ENCODE measurements at regions of chr5 and their contacts with region 1.

Region 1: DNA sequence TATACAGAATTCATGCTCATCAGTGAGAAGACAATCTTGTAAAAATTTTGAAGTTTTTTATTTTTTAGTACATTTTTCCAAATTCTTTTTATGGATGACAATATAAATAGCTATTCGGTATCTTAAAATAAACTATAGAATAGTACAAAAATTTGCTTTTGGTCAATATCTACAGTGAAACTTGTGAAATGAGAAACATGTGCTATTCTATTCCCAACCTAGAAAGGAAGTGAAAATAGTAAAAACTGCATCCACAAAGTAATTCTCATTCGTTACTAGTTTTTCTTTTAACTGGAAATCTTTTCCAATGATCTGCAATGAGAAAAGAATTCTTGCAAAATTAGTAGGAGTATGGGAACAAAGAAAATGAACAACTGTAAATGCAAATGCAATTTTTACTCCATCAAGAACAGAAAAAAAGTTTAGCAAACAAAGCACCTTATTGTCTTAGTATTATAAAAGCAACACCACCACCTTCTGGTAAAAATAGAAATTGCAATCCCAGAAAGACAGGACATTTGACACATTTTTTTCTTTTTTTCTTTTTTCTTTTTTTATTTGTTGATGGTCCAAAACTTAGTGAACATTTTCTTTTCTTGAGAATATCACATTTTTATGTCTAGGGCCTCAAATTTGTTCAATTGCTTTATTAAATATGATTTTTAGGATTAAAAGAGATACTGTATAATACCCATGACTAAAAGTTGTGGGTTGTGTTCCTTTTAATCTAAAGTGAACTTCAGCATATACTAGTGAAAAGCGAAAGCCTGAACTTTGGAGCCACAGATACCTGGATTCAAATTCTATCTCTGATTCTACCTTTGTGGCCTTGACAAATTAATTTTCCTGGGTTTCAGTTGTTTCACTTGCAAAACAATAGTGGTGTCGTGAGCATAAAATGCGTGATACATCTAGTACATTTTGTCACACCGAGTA is 72.3 kb downstream of the SLCO4C1 start:
- DNase-seq: no peak
- H3K4me3 ChIP-seq: no peak overlapping the region
- H3K27ac ChIP-seq: no peak overlapping the region
- H3K4me1 ChIP-seq: no peaks in the 10 kb centered on the region
- H3K27me3 ChIP-seq: no peaks in the 10 kb centered on the region
- CTCF ChIP-seq: peak; percentile 84

Region 2: DNA sequence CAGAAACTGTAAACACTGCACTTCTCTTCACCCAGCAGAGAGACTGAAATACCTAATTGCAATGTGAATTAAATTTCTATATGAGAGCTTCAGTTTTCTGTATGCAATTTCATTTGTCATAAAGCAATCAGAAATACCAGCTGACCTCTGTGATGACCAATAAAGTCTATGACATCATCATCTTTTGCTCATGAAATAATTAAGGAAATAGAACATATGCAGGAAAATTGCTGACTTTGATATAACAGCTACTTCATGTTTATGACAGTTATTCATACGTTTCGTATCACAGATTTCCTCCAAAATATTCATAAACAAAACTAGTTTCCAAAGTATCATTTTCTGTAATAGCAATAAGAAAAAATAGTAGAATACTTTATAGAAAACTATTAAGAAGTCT is 580.0 kb before region 1 on chr5:
- CTCF ChIA-PET with region 1: interaction called, 14 read pairs
- POLR2A ChIA-PET with region 1: no interaction called
- intact Hi-C with region 1: no loop called
- DNase-seq: no peak
- H3K4me3 ChIP-seq: no peak overlapping the region
- H3K27ac ChIP-seq: no peak overlapping the region
- H3K4me1 ChIP-seq: no peaks in the 10 kb centered on the region
- H3K27me3 ChIP-seq: no peaks in the 10 kb centered on the region
- CTCF ChIP-seq: no peak

Region 3: DNA sequence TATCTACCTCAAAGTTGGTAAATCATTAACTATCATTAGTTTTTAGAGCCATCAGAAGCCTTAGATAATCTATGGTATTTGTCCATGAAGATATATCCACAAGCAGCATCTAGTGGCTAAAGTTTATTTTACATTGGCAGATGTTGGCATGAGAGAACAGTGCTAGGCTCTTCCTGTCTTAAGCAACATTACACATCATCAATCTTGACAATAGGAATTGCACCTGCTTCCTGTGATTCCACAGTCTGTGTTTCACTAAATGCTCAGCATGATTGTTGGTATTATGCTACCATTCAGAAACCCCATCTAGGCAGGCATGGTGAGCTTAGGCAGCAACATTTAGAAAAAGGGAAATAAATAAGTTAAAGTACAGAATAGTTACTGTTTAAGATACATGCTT is 174.3 kb before region 1 on chr5:
- CTCF ChIA-PET with region 1: no interaction called
- POLR2A ChIA-PET with region 1: no interaction called
- intact Hi-C with region 1: no loop called
- DNase-seq: no peak
- H3K4me3 ChIP-seq: no peak overlapping the region
- H3K27ac ChIP-seq: no peak overlapping the region
- H3K4me1 ChIP-seq: no peaks in the 10 kb centered on the region
- H3K27me3 ChIP-seq: no peaks in the 10 kb centered on the region
- CTCF ChIP-seq: no peak

Region 4: GRCh38 chr5:102341681-102342288 is 118.0 kb after region 1 on chr5:
- CTCF ChIA-PET with region 1: no interaction called
- POLR2A ChIA-PET with region 1: no interaction called
- intact Hi-C with region 1: no loop called
- DNase-seq: no peak
- H3K4me3 ChIP-seq: no peak overlapping the region
- H3K27ac ChIP-seq: no peak overlapping the region
- H3K4me1 ChIP-seq: no peaks in the 10 kb centered on the region
- H3K27me3 ChIP-seq: no peaks in the 10 kb centered on the region
- CTCF ChIP-seq: no peak

Measured in PC-9 (cell line).